ENCODE measurements at regions of chr19 and their contacts with region 1.

Region 1: GRCh38 chr19:42219812-42220750 is at the start of gene ZNF526:
- DNase-seq: peak; percentile 96 to 99 (median 98)
- ATAC-seq: peak; percentile 92 to 96 (median 94)
- H3K4me3 ChIP-seq: peak within 1 kb of the TSS; percentile 64 to 98 (median 89)
- H3K27ac ChIP-seq: peak within 1 kb of the TSS in 11 of 12 donors; percentile 50 to 93 (median 80)
- H3K4me1 ChIP-seq: peaks cover 0 to 60% (median 34%) of the 10 kb centered on the region in 12 donors
- H3K27me3 ChIP-seq: no peaks in the 10 kb centered on the region
- CTCF ChIP-seq: peak in 1 of 12 donors; percentile 5
- POLR2A ChIP-seq: peak in 1 of 2 donors; percentile 83
- total RNA-seq, gene ZNF526: 3.9 to 7.2 (median 5.8) TPM

Region 2: GRCh38 chr19:41859618-41860418 is 360.3 kb before region 1 on chr19 and contains the start of gene RPS19:
- intact Hi-C with region 1: loop called in 1 of 10 experiments (anchors 10 kb)
- DNase-seq: peak; percentile 98 to 99 (median 99)
- ATAC-seq: peak; percentile 95 to 97 (median 96)
- H3K4me3 ChIP-seq: peak within 1 kb of the TSS; percentile 74 to 94 (median 86)
- H3K27ac ChIP-seq: peak within 1 kb of the TSS; percentile 91 to 99 (median 97)
- H3K4me1 ChIP-seq: peaks cover 6 to 43% (median 30%) of the 10 kb centered on the region in 12 donors
- H3K27me3 ChIP-seq: no peaks in the 10 kb centered on the region
- CTCF ChIP-seq: peak; percentile 44 to 81 (median 66)
- POLR2A ChIP-seq: peak; percentile 31 to 78
- total RNA-seq, gene RPS19: 161 to 1,072 (median 585) TPM

Region 3: DNA sequence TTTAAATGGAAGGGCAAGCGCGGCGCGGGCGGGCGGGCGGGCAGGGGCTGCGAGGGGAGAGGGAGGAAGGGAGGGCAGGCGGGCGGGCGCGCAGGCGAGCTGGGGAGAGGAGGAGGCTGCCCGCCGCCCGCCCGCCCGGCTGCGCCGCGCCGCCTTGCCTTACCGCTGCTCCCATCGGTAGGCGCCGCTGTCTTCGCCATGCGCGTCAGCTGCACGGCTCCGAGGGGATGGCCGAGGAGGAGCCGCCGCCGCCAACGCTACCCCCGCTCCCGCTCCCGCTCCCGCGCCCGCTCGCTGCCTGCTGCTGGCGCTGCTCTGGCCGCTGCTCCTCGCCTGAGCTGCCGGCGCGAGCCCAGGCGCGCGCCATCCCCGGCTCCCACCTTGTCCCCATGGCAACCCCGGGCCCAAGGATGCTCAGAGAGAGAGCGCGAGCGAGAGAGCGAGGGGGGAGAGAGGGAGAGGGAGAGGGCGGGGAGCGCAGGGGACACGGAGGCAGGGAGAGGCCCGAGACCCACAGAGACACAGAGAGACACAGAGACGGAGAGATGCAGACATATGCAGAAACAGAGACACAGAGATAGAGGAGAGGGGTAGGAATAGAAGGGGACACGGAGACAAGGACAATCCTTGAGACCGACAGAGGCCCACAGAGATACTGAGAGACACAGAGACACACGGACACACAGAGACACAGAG is 42.9 kb before region 1 on chr19:
- intact Hi-C with region 1: loop called in 1 of 10 experiments (anchors 1 kb)
- DNase-seq: peak; percentile 59 to 86 (median 73)
- ATAC-seq: peak in 3 of 4 donors; percentile 89 to 97 (median 94)
- H3K4me3 ChIP-seq: peak overlapping the region; percentile 18 to 61 (median 44)
- H3K27ac ChIP-seq: no peak overlapping the region
- H3K4me1 ChIP-seq: peaks cover 0 to 18% (median 8%) of the 10 kb centered on the region in 12 donors
- H3K27me3 ChIP-seq: peaks cover 9 to 76% (median 60%) of the 10 kb centered on the region in 9 donors
- CTCF ChIP-seq: peak in 11 of 12 donors; percentile 14 to 71 (median 34)
- POLR2A ChIP-seq: no peak